ENCODE measurements at regions of chr2 and their contacts with region 1.

Region 1: DNA sequence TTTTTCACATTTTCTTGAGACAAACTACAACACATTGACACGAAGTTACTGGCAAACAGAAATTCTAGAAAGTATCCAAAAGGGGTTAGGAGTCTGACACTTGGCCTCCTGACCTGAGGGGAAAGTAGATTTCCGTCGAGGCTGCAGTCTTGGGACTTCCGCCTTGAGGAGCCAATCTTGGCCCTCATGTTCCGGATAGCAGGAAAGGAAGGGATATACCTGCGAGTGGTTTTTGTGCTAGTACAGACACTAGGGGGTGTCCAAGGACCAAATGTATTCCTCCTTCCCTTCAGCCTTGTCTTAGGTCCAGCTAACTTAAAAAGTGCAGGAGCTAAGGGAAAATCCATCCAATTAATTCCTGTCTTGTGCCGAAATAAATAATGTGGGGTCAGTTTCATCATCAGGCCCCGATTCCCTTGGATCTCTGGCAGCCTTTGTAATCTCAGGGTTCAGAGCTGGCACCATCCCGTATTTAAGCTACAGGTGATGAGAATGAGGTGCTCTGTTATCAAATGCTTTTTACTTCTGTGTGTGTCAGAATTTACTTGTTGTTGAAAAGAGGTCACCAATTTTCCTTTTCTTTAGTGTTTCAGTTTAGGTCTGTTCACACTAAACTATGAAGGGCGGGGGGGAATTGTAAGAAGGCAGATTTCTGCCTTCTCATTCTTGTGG is 330.2 kb upstream of the FANCL start:
- DNase-seq: peak; percentile 46 to 57
- H3K4me3 ChIP-seq: no peak overlapping the region
- H3K27ac ChIP-seq: no peak overlapping the region
- H3K4me1 ChIP-seq: no peaks in the 10 kb centered on the region
- H3K27me3 ChIP-seq: no peaks in the 10 kb centered on the region
- CTCF ChIP-seq: peak; percentile 85

Region 2: GRCh38 chr2:57906152-57906732 is 665.1 kb before region 1 on chr2:
- CTCF ChIA-PET with region 1: no interaction called
- POLR2A ChIA-PET with region 1: no interaction called
- intact Hi-C with region 1: loop called (anchors 1 kb)
- DNase-seq: peak in 1 of 2 experiments; percentile 52
- H3K4me3 ChIP-seq: no peak overlapping the region
- H3K27ac ChIP-seq: no peak overlapping the region
- H3K4me1 ChIP-seq: no peaks in the 10 kb centered on the region
- H3K27me3 ChIP-seq: no peaks in the 10 kb centered on the region
- CTCF ChIP-seq: peak; percentile 93

Region 3: DNA sequence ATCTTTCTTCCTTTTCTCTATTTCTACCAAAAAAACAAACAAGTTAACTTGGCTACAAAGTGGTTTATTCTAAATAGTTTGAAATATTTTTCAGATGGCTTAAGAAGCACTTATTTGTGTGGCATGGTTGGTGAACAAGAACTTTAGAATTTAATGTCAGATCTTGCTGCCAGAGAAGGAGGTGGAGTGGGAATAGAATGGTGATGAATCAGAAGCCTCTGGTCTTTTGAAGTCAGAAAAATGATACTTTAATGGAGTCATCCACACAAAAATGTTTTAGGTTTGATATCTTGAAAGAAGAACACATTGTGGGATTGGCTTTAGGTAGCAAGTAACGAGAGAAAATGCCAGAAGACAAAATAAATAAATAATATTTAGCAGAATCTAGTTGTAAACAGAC is 87.1 kb before region 1 on chr2:
- CTCF ChIA-PET with region 1: no interaction called
- POLR2A ChIA-PET with region 1: no interaction called
- intact Hi-C with region 1: no loop called
- DNase-seq: no peak
- H3K4me3 ChIP-seq: no peak overlapping the region
- H3K27ac ChIP-seq: no peak overlapping the region
- H3K4me1 ChIP-seq: no peaks in the 10 kb centered on the region
- H3K27me3 ChIP-seq: no peaks in the 10 kb centered on the region
- CTCF ChIP-seq: no peak

Region 4: GRCh38 chr2:58633576-58634365 is 62.5 kb after region 1 on chr2:
- CTCF ChIA-PET with region 1: no interaction called
- POLR2A ChIA-PET with region 1: interaction called, 12 read pairs
- intact Hi-C with region 1: loop called (anchors 2 kb)
- DNase-seq: peak; percentile 5 to 81
- H3K4me3 ChIP-seq: no peak overlapping the region
- H3K27ac ChIP-seq: peak overlapping the region; percentile 97
- H3K4me1 ChIP-seq: peaks cover 40% of the 10 kb centered on the region
- H3K27me3 ChIP-seq: no peaks in the 10 kb centered on the region
- CTCF ChIP-seq: no peak

Region 5: GRCh38 chr2:58680755-58681310 is 109.5 kb after region 1 on chr2:
- CTCF ChIA-PET with region 1: interaction called, 9 read pairs
- POLR2A ChIA-PET with region 1: no interaction called
- intact Hi-C with region 1: loop called (anchors 2 kb)
- DNase-seq: no peak
- H3K4me3 ChIP-seq: no peak overlapping the region
- H3K27ac ChIP-seq: no peak overlapping the region
- H3K4me1 ChIP-seq: no peaks in the 10 kb centered on the region
- H3K27me3 ChIP-seq: no peaks in the 10 kb centered on the region
- CTCF ChIP-seq: peak; percentile 60

Region 6: GRCh38 chr2:58762176-58762781 is 191.0 kb after region 1 on chr2:
- CTCF ChIA-PET with region 1: no interaction called
- POLR2A ChIA-PET with region 1: no interaction called
- intact Hi-C with region 1: loop called (anchors 1 kb)
- DNase-seq: peak; percentile 67 to 75
- H3K4me3 ChIP-seq: no peak overlapping the region
- H3K27ac ChIP-seq: no peak overlapping the region
- H3K4me1 ChIP-seq: no peaks in the 10 kb centered on the region
- H3K27me3 ChIP-seq: no peaks in the 10 kb centered on the region
- CTCF ChIP-seq: peak; percentile 72

Region 7: DNA sequence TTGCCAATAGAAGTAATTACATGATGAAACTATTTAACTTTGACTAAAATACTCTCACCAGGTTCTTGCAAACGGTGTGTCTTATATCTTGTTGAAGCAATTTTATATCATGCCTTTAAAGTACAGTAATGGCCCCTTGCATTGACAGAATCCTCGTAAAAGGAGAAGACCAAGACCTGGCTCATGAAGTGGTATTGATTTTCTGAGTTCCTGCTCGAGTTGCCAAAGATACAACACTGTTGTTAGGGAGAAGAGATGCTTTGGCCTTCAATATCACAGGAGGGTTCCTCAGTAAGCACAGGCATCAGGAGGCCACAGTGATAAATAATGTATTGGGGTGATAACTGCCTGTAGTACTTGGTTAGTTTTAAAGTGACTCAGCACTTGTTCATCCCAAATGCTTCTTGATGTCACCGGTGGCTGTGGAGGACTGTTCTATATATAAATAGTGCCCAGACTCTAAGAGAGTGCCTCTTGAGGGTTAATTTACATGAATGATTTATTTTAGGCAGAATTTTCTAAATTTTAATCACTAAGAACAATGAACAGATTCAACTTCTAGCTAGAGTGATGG is 241.5 kb after region 1 on chr2:
- CTCF ChIA-PET with region 1: interaction called, 18 read pairs
- POLR2A ChIA-PET with region 1: no interaction called
- intact Hi-C with region 1: no loop called
- DNase-seq: no peak
- H3K4me3 ChIP-seq: no peak overlapping the region
- H3K27ac ChIP-seq: no peak overlapping the region
- H3K4me1 ChIP-seq: no peaks in the 10 kb centered on the region
- H3K27me3 ChIP-seq: no peaks in the 10 kb centered on the region
- CTCF ChIP-seq: no peak

Region 8: DNA sequence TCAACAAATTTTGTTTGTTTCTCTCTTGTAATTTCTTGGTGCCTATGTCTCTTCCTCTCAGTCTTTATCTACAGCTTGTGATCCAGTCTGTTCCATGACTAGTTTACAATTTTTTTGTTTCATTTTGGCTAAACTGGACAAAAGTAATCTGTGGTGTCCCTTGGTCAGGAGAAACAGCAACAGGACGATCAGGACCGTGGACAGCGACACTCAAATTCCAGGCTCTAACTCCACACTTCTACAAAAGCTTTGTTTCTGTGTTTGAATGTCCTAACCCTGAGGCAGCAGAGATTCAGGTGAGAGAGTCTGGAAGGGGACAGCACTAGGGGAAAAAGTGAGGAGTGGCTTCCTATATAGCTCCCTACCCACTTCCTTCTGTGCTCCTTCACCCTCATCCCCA is 263.1 kb after region 1 on chr2:
- CTCF ChIA-PET with region 1: no interaction called
- POLR2A ChIA-PET with region 1: no interaction called
- intact Hi-C with region 1: loop called (anchors 10 kb)
- DNase-seq: peak in 1 of 2 experiments; percentile 17
- H3K4me3 ChIP-seq: no peak overlapping the region
- H3K27ac ChIP-seq: no peak overlapping the region
- H3K4me1 ChIP-seq: no peaks in the 10 kb centered on the region
- H3K27me3 ChIP-seq: no peaks in the 10 kb centered on the region
- CTCF ChIP-seq: no peak

Measured in PC-9 (cell line).